ENCODE measurements at regions of chr6 and their contacts with region 1.

Region 1: DNA sequence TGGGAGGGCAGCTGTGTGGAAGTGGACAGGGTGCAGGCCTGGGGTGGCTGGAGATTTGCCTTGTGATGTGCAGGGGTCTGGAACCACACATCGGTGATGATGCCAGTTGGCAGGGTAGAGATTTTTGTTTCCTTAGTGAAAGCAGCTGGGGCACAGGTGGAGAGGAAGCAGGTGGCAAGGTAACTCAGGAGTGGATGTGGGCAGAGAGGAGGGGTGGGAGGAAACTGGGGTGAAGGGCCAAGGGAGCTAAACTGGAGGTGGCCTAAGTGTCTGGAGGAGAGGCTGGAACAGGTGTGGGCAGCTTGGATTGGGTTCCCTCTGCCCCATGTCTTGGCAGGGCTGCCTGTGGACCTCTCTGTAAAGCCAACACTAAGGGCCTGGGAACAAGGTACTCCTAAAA is 4.7 kb upstream of the SCUBE3 start:
- DNase-seq: no peak
- H3K4me3 ChIP-seq: no peak overlapping the region
- H3K27ac ChIP-seq: no peak overlapping the region
- H3K4me1 ChIP-seq: peaks cover 10 to 12% (median 11%) of the 10 kb centered on the region in 4 donors
- H3K27me3 ChIP-seq: peaks cover 0 to 90% (median 52%) of the 10 kb centered on the region in 3 donors
- CTCF ChIP-seq: no peak
- EP300 ChIP-seq: no peak
- POLR2A ChIP-seq: no peak

Region 2: DNA sequence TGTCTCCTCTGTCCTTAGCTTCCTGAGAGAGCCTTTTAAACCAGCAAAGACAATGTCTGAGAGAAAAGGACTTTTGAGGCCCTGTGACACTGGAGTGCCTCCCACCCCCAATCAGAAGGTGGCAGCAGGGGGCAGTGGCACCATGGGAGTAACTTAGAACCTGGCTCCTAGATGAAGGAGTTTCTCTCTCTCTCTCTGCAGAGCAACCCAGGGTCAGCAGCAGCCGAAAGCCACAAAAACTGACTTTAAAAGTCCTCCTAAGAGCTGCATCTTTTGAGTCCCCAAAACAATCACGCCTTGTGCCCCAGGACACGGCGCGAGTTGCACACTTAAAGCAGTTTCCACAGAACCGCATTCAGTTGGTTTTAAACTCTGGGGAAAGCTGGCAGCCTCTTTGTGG is 62.6 kb before region 1 on chr6:
- intact Hi-C with region 1: loop called (anchors 5 kb)
- DNase-seq: peak; percentile 73 to 77
- H3K4me3 ChIP-seq: no peak overlapping the region
- H3K27ac ChIP-seq: no peak overlapping the region
- H3K4me1 ChIP-seq: peaks cover 0 to 7% (median under 1%) of the 10 kb centered on the region in 4 donors
- H3K27me3 ChIP-seq: peaks cover 0 to 2% (median 0%) of the 10 kb centered on the region in 3 donors
- CTCF ChIP-seq: peak in 5 of 7 experiments; percentile 44 to 82 (median 69)
- EP300 ChIP-seq: no peak
- POLR2A ChIP-seq: no peak